ENCODE measurements at regions of chr6 and their contacts with region 1.

Region 1: GRCh38 chr6:27753668-27754407 is 158.4 kb downstream of the OR2B2 start:
- DNase-seq: no peak
- H3K4me3 ChIP-seq: peak overlapping the region; percentile 14 to 68
- H3K27ac ChIP-seq: no peak overlapping the region
- H3K4me1 ChIP-seq: peaks cover 8% of the 10 kb centered on the region
- H3K27me3 ChIP-seq: no peaks in the 10 kb centered on the region
- CTCF ChIP-seq: no peak
- POLR2A ChIP-seq: no peak

Region 2: DNA sequence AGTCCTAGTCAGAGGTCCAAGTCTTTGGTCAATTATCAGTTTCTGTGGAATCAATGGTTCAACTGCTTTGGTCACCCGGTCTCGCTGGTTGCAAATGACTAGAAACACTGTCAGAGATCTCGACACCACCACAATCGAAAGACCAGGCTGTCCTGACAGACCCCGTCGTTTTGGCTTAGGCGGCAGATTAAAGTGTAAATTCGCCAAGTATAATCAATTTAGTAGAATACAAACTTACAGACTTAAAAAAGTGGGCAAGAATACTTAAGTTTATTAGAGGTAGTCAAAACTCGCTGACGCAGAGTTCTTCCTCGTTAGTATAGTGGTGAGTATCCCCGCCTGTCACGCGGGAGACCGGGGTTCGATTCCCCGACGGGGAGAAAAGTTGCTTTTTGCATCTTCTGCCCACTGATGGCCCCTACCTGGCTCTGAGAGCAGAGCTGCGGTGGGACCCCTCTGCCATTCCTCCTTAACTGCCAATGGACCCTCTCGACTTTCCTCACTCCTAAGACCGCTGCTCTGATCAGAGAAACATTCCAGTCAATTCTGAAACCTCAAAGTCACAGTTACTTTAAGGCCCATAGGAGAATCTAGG is 250.3 kb before region 1 on chr6:
- intact Hi-C with region 1: loop called (anchors 10 kb)
- DNase-seq: no peak
- H3K4me3 ChIP-seq: peak overlapping the region; percentile 47 to 48
- H3K27ac ChIP-seq: peak overlapping the region; percentile 70
- H3K4me1 ChIP-seq: peaks cover 8% of the 10 kb centered on the region
- H3K27me3 ChIP-seq: no peaks in the 10 kb centered on the region
- CTCF ChIP-seq: no peak
- POLR2A ChIP-seq: no peak

Region 3: GRCh38 chr6:27795697-27796494 is 42.1 kb after region 1 on chr6:
- intact Hi-C with region 1: loop called (anchors 2 kb)
- DNase-seq: no peak
- H3K4me3 ChIP-seq: no peak overlapping the region
- H3K27ac ChIP-seq: no peak overlapping the region
- H3K4me1 ChIP-seq: peaks cover 8% of the 10 kb centered on the region
- H3K27me3 ChIP-seq: no peaks in the 10 kb centered on the region
- CTCF ChIP-seq: peak; percentile 39 to 73 (median 62)
- POLR2A ChIP-seq: no peak

Measured in vagina (tissue), 2 donors.